ENCODE measurements at regions of chr18 and their contacts with region 1.

Region 1: DNA sequence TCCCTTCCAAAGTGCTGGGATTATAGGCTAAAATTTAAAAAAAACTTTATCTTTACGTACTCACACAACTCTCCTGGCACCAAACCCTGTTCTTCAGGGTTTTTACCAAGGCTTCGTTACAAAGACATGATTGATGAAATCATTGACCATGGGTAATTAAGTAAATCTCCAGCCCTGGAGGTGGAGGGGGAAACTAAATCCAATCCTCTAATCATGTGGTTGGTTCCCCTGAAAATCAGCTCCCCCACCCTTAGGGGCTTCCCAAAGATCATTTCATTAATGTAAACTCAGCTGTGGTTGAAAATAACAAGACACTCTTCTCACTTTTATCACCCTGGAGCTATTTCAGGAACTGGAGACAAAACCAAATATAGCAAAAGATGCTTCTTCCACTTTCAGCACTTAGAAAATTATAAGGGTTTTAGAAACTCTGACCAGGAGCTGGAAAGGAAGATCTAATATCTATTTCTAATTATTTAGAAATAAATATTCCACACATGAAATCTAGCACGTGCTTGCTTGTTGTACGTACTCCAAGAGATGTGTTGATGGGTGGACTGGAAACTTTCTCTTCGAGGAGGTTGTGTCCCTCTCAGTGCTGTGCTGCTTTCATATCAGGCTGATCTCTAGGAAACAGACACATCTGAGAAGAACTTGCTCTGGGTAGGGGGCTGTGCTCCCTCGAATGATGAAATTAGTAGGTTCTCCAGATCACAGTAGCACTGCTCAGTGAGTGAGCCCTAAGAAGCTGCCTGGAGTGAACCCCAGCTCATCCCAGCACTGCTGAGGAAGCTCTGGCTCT is 67.2 kb downstream of the SMAD4 start:
- DNase-seq: no peak
- ATAC-seq: peak; percentile 85
- H3K4me3 ChIP-seq: no peak overlapping the region
- H3K27ac ChIP-seq: peak overlapping the region; percentile 17
- H3K4me1 ChIP-seq: peaks cover 7% of the 10 kb centered on the region
- H3K27me3 ChIP-seq: no peaks in the 10 kb centered on the region
- CTCF ChIP-seq: no peak
- EP300 ChIP-seq: peak; percentile 44 to 51; a peak in 1 of 4 replicates
- POLR2A ChIP-seq: no peak
- RAD21 ChIP-seq: no peak

Region 2: GRCh38 chr18:51082571-51083267 is 14.5 kb before region 1 on chr18:
- CTCF ChIA-PET with region 1: interaction called, 3 read pairs
- POLR2A ChIA-PET with region 1: no interaction called
- RAD21 ChIA-PET with region 1: no interaction called
- SMC1A ChIA-PET with region 1: interaction called, 13 read pairs
- in situ Hi-C with region 1: no loop called
- intact Hi-C with region 1: no loop called
- DNase-seq: no peak
- ATAC-seq: peak; percentile 70
- H3K4me3 ChIP-seq: no peak overlapping the region
- H3K27ac ChIP-seq: peak overlapping the region; percentile 33
- H3K4me1 ChIP-seq: peaks cover 3% of the 10 kb centered on the region
- H3K27me3 ChIP-seq: no peaks in the 10 kb centered on the region
- CTCF ChIP-seq: no peak
- EP300 ChIP-seq: peak in 1 of 2 experiments; percentile 53; a peak in 1 of 4 replicates
- POLR2A ChIP-seq: no peak
- RAD21 ChIP-seq: no peak

Region 3: GRCh38 chr18:51128533-51128932 is 31.3 kb after region 1 on chr18:
- CTCF ChIA-PET with region 1: no interaction called
- POLR2A ChIA-PET with region 1: no interaction called
- RAD21 ChIA-PET with region 1: no interaction called
- SMC1A ChIA-PET with region 1: no interaction called
- in situ Hi-C with region 1: no loop called
- intact Hi-C with region 1: no loop called
- DNase-seq: no peak
- ATAC-seq: no peak
- H3K4me3 ChIP-seq: no peak overlapping the region
- H3K27ac ChIP-seq: no peak overlapping the region
- H3K4me1 ChIP-seq: no peaks in the 10 kb centered on the region
- H3K27me3 ChIP-seq: no peaks in the 10 kb centered on the region
- CTCF ChIP-seq: no peak
- EP300 ChIP-seq: no peak
- POLR2A ChIP-seq: no peak
- RAD21 ChIP-seq: no peak

Measured in GM12878 (cell line).